K562 (cell line): ENCODE measurements at regions of chr6 and their contacts with region 1.

Region 1: DNA sequence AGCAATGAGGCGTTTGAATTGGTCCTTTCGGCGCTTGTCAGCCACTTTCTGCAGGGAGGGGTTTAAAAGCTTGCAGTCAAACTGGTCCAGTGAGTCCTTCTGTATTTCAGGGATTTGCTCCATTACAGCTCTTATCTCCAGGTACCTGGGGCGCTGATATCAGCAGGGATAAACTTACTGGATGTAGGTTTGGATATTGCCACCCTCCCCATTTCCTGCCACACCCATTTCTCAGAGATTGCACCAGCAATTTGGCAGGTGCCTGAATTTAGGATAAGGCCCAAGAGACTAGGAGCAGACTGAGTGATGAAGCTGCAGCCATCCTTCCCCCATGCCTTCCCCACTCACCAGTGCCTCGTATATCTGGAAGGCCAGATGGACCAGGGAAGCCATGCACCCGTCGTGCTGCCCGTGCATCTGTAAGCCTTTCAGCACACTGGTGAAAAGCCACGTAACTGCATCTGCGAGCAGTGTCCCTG is 7.6 kb downstream of the POLR1C start:
- DNase-seq: peak in 2 of 4 experiments; percentile 31 to 43
- ATAC-seq: peak; percentile 29
- H3K4me3 ChIP-seq: no peak overlapping the region
- H3K27ac ChIP-seq: peak overlapping the region; percentile 9; the same call in 1 of the 3 replicates
- H3K4me1 ChIP-seq: peaks cover 4% of the 10 kb centered on the region in 2 experiments; a peak in 3 of 5 replicates
- H3K27me3 ChIP-seq: no peaks in the 10 kb centered on the region
- CTCF ChIP-seq: no peak
- EP300 ChIP-seq: peak; percentile 47
- POLR2A ChIP-seq: 0 out of 2 replicates have a peak, but pooled peaks have one; percentile 17
- RAD21 ChIP-seq: no peak

Region 2: GRCh38 chr6:43454696-43455530 is 69.6 kb before region 1 on chr6:
- CTCF ChIA-PET with region 1: no interaction called
- POLR2A ChIA-PET with region 1: interaction called, 11 read pairs
- in situ Hi-C with region 1: no loop called
- intact Hi-C with region 1: no loop called
- DNase-seq: peak; percentile 89 to 90 (median 90)
- ATAC-seq: peak; percentile 96
- H3K4me3 ChIP-seq: peak overlapping the region; percentile 53
- H3K27ac ChIP-seq: no peak overlapping the region
- H3K4me1 ChIP-seq: peaks cover 0 to 18% of the 10 kb centered on the region in 2 experiments; a peak in 4 of 5 replicates
- H3K27me3 ChIP-seq: no peaks in the 10 kb centered on the region; a peak in 1 of 5 replicates
- CTCF ChIP-seq: no peak; a peak in 1 of 6 replicates
- EP300 ChIP-seq: no peak
- POLR2A ChIP-seq: 0 out of 2 replicates have a peak, but pooled peaks have one; percentile 24
- RAD21 ChIP-seq: no peak; a peak in 1 of 4 replicates

Region 3: GRCh38 chr6:43541774-43542471 is 17.4 kb after region 1 on chr6:
- CTCF ChIA-PET with region 1: no interaction called
- POLR2A ChIA-PET with region 1: interaction called, 21 read pairs
- in situ Hi-C with region 1: no loop called
- intact Hi-C with region 1: no loop called
- DNase-seq: no peak
- ATAC-seq: no peak
- H3K4me3 ChIP-seq: no peak overlapping the region
- H3K27ac ChIP-seq: no peak overlapping the region
- H3K4me1 ChIP-seq: no peaks in the 10 kb centered on the region
- H3K27me3 ChIP-seq: no peaks in the 10 kb centered on the region
- CTCF ChIP-seq: no peak
- EP300 ChIP-seq: no peak
- POLR2A ChIP-seq: no peak
- RAD21 ChIP-seq: no peak